ENCODE measurements at regions of chr5 and their contacts with region 1.

Region 1: GRCh38 chr5:40679155-40679913 is 381 bp upstream of the PTGER4 start:
- DNase-seq: peak; percentile 94
- H3K4me3 ChIP-seq: peak overlapping the region; percentile 95
- H3K27ac ChIP-seq: peak overlapping the region; percentile 93
- H3K4me1 ChIP-seq: peaks cover 46% of the 10 kb centered on the region
- H3K27me3 ChIP-seq: peaks cover 38% of the 10 kb centered on the region
- CTCF ChIP-seq: no peak

Region 2: DNA sequence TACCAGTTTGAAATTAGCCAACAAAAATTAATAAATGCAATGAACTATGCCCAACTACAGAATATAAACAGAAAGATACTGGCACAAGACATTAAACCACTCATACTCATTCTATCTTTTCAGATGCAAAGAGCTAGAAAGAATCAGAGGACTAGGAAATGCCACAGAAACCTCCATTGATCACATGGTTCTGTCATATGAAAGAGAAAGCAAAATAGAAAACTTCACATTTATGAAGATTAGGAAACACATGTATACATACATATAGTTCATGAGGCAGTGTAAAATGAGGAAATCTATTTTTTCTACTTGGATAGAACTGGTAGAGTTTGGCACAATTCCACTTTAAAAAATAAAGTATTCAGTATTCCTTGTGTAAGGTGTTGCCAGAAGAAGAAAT is 274.7 kb before region 1 on chr5:
- intact Hi-C with region 1: loop called (anchors 10 kb)
- DNase-seq: no peak
- H3K4me3 ChIP-seq: no peak overlapping the region
- H3K27ac ChIP-seq: peak overlapping the region; percentile 67
- H3K4me1 ChIP-seq: peaks cover 42% of the 10 kb centered on the region
- H3K27me3 ChIP-seq: no peaks in the 10 kb centered on the region
- CTCF ChIP-seq: no peak

Measured in left ventricle myocardium inferior (tissue), 1 donor.